ENCODE measurements at regions of chr11 and their contacts with region 1.

Region 1: GRCh38 chr11:123054301-123055065 is 7.5 kb downstream of the HSPA8 start:
- DNase-seq: peak in 8 of 35 experiments; percentile 11 to 83 (median 22)
- ATAC-seq: peak; percentile 74 to 83 (median 78)
- H3K4me3 ChIP-seq: no peak overlapping the region
- H3K4me3 Mint-ChIP-seq: peak overlapping the region in 2 of 3 donors; percentile 28 to 99
- H3K27ac ChIP-seq: peak overlapping the region; percentile 44
- H3K27ac Mint-ChIP-seq: peak overlapping the region; percentile 100
- H3K4me1 ChIP-seq: peaks cover 39 to 50% of the 10 kb centered on the region in 2 experiments
- H3K4me1 Mint-ChIP-seq: peaks cover 52 to 56% (median 55%) of the 10 kb centered on the region in 3 donors
- H3K27me3 ChIP-seq: no peaks in the 10 kb centered on the region
- H3K27me3 Mint-ChIP-seq: no peaks in the 10 kb centered on the region

Region 2: DNA sequence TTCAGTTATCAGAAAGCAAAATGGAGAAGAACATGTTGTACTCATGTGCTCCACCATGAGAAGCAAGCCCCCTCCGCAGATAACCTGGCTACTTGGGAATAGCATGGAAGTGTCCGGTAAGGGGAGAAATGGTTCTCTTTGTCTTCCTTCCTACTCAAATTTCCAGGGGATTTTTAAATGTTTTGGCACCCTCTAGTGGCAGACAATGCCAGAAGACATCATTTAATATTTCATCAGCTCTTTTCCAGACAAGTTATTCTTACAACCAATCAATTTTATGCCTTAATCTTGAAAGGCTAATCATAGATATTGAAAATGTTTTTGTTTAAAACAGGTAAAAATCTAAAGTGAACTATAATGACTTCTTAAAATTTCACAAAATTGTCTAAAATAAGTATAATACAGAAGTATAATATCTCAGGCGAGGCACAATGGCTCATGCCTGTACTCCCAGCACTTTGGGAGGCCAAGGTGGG is 200.5 kb before region 1 on chr11:
- CTCF ChIA-PET with region 1: interaction called, 10 to 22 read pairs
- POLR2A ChIA-PET with region 1: interaction called, 3 read pairs
- DNase-seq: peak in 24 of 35 experiments; percentile 6 to 84 (median 42)
- ATAC-seq: no peak
- H3K4me3 ChIP-seq: no peak overlapping the region
- H3K4me3 Mint-ChIP-seq: no peak overlapping the region
- H3K27ac ChIP-seq: peak overlapping the region; percentile 13
- H3K27ac Mint-ChIP-seq: no peak overlapping the region
- H3K4me1 ChIP-seq: peaks cover 15 to 53% of the 10 kb centered on the region in 2 experiments
- H3K4me1 Mint-ChIP-seq: peaks cover 39 to 52% (median 47%) of the 10 kb centered on the region in 3 donors
- H3K27me3 ChIP-seq: no peaks in the 10 kb centered on the region
- H3K27me3 Mint-ChIP-seq: no peaks in the 10 kb centered on the region

Region 3: DNA sequence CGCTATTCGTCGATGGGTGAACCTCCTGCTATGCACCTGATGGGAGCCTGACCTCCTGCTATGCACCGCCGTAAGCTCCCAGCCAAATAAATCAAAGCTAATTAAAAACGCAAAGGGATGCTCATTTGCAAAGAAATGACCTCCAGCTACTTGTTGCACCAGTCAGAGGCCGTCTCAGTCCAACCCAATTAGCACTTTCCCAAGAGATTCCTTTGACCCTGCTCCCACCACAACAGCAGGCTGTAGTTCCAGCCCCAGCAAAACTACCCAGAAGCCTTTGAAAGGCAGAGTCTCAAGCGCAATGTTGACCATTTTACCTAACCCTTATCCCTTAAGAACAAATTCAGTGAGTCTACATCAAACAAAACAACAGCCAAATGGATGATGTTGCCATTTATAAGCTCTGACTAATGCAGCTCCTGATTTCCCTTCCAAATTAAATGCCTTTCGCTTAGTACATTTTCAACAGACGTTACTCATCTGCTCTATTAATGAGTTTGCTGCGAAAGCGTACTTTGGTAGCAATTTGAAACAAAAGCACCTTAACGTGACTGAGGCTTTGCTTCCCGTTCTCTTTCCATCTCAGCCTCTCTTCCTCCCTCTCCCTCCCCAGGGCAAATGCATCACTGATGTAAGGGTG is 55.6 kb before region 1 on chr11:
- CTCF ChIA-PET with region 1: no interaction called
- POLR2A ChIA-PET with region 1: no interaction called
- DNase-seq: no peak
- ATAC-seq: no peak
- H3K4me3 ChIP-seq: no peak overlapping the region
- H3K4me3 Mint-ChIP-seq: no peak overlapping the region
- H3K27ac ChIP-seq: no peak overlapping the region
- H3K27ac Mint-ChIP-seq: no peak overlapping the region
- H3K4me1 ChIP-seq: no peaks in the 10 kb centered on the region
- H3K4me1 Mint-ChIP-seq: no peaks in the 10 kb centered on the region
- H3K27me3 ChIP-seq: peaks cover 6 to 9% of the 10 kb centered on the region in 2 experiments
- H3K27me3 Mint-ChIP-seq: peaks cover 22 to 28% of the 10 kb centered on the region in 2 donors

Region 4: DNA sequence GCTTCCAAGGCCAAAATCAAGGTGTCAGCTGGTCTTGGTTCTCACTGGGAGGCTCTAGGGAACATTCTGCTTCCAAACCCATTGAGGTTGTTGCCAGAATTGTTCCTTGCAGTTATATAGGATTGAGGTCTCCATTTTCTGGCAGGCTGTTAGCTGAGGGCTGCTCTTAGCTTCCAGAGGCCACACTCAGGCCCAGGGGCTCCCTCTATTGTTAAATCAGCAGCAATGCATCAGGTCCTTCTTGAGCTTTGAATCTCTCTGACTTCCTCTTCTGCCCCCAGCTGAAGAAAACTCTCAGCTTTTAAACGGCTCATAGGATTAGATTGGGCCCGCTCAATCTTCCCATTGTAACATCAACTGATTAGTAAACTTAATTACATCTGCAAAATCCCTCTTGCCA is 33.5 kb before region 1 on chr11:
- CTCF ChIA-PET with region 1: interaction called, 4 to 15 read pairs
- POLR2A ChIA-PET with region 1: no interaction called
- DNase-seq: peak in 19 of 35 experiments; percentile 1 to 56 (median 9)
- ATAC-seq: peak; percentile 43 to 73 (median 60)
- H3K4me3 ChIP-seq: no peak overlapping the region
- H3K4me3 Mint-ChIP-seq: no peak overlapping the region
- H3K27ac ChIP-seq: no peak overlapping the region
- H3K27ac Mint-ChIP-seq: no peak overlapping the region
- H3K4me1 ChIP-seq: peaks cover 0 to 5% of the 10 kb centered on the region in 2 experiments
- H3K4me1 Mint-ChIP-seq: peaks cover 6 to 8% (median 8%) of the 10 kb centered on the region in 3 donors
- H3K27me3 ChIP-seq: peaks cover 0 to 12% of the 10 kb centered on the region in 2 experiments
- H3K27me3 Mint-ChIP-seq: peaks cover 4 to 10% of the 10 kb centered on the region in 2 donors

Region 5: DNA sequence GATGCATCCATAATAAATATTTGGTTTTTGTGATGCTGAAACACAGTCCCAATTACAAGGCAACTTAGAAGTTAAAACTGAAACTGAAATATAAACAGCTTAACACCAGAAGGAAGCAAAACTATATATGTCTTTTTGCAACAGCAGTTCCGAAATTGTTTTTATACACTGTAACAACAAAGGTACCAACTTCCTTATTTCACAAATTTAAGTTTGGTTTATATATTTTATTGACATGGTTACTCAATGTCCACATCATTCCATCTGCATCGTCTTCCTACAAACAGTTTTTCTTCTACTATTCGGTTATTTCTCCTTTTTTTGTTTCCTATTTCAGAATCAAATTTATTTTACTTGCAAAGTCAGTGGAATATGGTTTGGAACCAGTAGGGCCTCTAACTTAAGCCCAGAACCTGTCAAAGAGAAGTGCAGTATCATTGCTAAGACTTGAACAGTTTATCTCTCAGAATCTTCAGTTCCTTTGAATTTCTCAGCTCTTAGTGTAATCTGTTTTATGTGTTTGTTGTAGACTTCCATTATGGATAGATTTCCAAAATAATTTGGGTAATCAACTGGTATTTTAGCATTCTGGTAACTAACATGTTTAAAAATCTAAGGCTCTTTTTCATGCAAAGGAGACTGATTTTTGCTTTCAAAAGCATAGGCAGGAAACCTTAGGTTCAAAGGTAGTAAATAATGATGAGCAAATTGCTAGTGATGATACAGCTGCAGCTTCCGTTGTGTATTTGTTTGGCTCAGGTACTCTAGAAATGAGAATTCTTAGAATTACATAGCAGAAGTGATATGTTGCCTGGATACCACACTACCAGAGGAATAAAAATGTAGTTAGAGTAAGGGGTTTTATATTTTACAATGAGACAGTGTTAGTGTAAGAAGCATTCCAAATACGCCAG is 15.7 kb after region 1 on chr11:
- CTCF ChIA-PET with region 1: interaction called, 5 to 40 read pairs
- POLR2A ChIA-PET with region 1: interaction called, 3 to 33 read pairs
- DNase-seq: peak in 5 of 35 experiments; percentile 22 to 62 (median 27)
- ATAC-seq: peak; percentile 77 to 90 (median 86)
- H3K4me3 ChIP-seq: peak overlapping the region; percentile 27 to 39
- H3K4me3 Mint-ChIP-seq: peak overlapping the region; percentile 78 to 87 (median 83)
- H3K27ac ChIP-seq: peak overlapping the region; percentile 93
- H3K27ac Mint-ChIP-seq: peak overlapping the region; percentile 99 to 100
- H3K4me1 ChIP-seq: peaks cover 51 to 52% of the 10 kb centered on the region in 2 experiments
- H3K4me1 Mint-ChIP-seq: peaks cover 61 to 74% (median 66%) of the 10 kb centered on the region in 3 donors
- H3K27me3 ChIP-seq: no peaks in the 10 kb centered on the region
- H3K27me3 Mint-ChIP-seq: no peaks in the 10 kb centered on the region

Region 6: DNA sequence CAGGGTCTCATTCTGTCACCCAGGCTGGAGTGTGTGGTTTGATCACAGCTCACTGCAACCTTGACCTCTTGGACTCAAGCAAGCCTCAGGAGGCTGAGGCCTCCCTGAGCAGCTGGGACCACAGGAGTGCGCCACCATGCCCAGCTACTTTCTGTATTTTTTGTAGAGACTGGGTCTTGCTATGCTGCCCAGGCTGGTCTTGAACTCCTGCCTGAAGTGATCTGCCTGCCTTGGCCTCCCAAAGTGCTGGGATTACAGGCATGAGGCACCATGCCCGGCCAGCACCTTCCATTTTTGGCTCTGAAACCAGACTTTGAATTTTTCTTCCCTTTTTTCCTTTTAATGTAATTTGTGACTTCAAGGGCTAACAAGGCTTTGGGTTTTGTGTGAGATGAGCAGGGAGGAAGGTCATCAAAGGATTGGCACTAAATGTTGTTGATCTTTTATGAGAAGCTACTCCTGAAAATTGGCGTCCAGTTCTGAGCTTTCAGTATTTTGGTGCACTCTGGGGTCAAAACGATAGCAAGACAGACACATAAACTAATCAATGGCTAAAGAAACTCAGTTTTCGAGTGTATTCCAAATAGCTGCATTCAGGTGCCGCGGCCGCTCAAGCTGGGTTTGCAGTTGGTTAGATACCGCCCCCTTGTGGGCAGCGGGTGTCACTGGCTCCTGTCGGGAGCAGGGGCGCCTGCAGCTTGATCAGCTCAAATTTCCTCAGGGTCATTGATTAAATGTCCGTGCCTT is 192.4 kb after region 1 on chr11:
- CTCF ChIA-PET with region 1: interaction called, 7 to 14 read pairs
- POLR2A ChIA-PET with region 1: no interaction called
- DNase-seq: peak; percentile 47 to 88 (median 76)
- ATAC-seq: peak; percentile 83 to 90 (median 87)
- H3K4me3 ChIP-seq: no peak overlapping the region
- H3K4me3 Mint-ChIP-seq: no peak overlapping the region
- H3K27ac ChIP-seq: no peak overlapping the region
- H3K27ac Mint-ChIP-seq: no peak overlapping the region
- H3K4me1 ChIP-seq: peaks cover 0 to 4% of the 10 kb centered on the region in 2 experiments
- H3K4me1 Mint-ChIP-seq: peaks cover 0 to 6% (median 4%) of the 10 kb centered on the region in 3 donors
- H3K27me3 ChIP-seq: peaks cover 0 to 5% of the 10 kb centered on the region in 2 experiments
- H3K27me3 Mint-ChIP-seq: peaks cover 10 to 14% of the 10 kb centered on the region in 2 donors

Region 7: DNA sequence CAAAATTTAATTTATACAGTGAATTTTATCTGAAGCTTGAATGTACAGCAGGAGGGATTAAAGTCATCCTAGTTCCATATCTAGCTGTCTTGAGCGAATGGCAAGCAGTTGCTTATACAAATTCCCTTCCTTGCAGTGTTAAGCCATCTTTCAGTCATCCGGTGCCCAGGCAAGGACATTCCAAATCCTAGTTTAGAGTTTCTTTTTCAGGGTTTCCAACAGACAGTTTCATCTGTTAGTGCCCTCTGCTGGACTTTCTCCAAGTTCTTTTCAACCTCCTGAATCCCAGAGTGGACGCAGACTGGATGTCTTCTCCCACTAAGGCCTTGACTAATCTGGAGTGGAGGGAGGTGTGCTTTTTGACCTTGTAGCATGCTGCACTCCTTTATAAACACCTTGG is 421.0 kb after region 1 on chr11:
- CTCF ChIA-PET with region 1: no interaction called
- POLR2A ChIA-PET with region 1: no interaction called
- DNase-seq: no peak
- ATAC-seq: no peak
- H3K4me3 ChIP-seq: no peak overlapping the region
- H3K4me3 Mint-ChIP-seq: no peak overlapping the region
- H3K27ac ChIP-seq: no peak overlapping the region
- H3K27ac Mint-ChIP-seq: no peak overlapping the region
- H3K4me1 ChIP-seq: peaks cover 0 to 16% of the 10 kb centered on the region in 2 experiments
- H3K4me1 Mint-ChIP-seq: peaks cover 8 to 14% (median 8%) of the 10 kb centered on the region in 3 donors
- H3K27me3 ChIP-seq: no peaks in the 10 kb centered on the region
- H3K27me3 Mint-ChIP-seq: no peaks in the 10 kb centered on the region